ENCODE measurements at regions of chr12 and their contacts with region 1.

Region 1: DNA sequence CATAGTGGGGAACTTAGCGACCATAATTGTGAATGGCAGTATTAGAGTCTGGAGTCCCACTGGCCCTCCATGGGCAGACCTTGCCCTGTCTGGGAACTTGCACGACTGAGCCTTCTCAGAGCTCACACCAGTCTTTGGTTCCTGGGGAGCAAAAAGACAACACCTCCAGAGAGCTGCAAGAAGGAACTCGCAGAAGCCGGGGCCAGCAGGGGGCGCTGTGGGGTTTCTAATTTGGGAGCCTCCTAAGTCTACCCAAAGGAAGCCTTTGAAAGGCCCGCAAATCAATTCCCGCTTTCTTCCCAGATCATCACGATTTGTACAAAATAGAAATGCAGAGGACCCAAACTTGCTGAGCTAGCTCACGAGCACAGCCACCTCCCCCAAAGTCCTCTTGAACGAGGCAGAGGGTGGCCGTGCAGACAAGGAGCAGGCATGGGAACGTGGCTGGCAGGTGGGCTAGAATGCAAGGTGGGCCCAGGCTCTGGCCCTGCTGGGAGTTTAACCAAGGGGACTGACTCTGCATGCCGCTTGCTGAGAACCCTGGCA is 46.3 kb upstream of the FBXO21 start:
- DNase-seq: peak; percentile 69 to 82
- ATAC-seq: peak; percentile 91 to 95
- H3K4me3 ChIP-seq: no peak overlapping the region
- H3K27ac ChIP-seq: no peak overlapping the region
- H3K4me1 ChIP-seq: no peaks in the 10 kb centered on the region
- CTCF ChIP-seq: peak; percentile 88
- EP300 ChIP-seq: no peak
- POLR2A ChIP-seq: no peak
- RAD21 ChIP-seq: peak; percentile 88 to 89

Region 2: DNA sequence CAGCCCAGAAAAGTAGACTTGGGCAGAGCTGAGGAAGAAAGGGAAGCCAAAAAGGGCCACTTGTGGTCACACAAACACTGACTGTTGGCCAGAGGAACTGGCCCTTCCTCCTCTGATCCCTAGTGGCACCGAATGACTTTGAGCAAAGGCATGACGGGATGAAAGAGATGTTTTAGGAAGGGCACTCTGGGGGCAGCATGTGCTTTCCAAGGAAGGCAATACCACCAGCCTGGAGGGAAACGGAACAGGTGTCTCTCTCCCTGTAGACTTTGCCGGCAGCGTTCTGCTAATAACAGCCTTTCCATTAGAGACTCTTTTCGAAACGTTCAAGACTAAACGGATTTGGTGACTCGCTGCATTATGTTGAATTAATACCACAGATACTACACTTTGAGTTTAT is 34.0 kb before region 1 on chr12:
- CTCF ChIA-PET with region 1: interaction called, 10 read pairs
- POLR2A ChIA-PET with region 1: no interaction called
- DNase-seq: no peak
- ATAC-seq: no peak
- H3K4me3 ChIP-seq: no peak overlapping the region
- H3K27ac ChIP-seq: no peak overlapping the region
- H3K4me1 ChIP-seq: no peaks in the 10 kb centered on the region
- CTCF ChIP-seq: no peak
- EP300 ChIP-seq: no peak
- POLR2A ChIP-seq: no peak
- RAD21 ChIP-seq: no peak

Region 3: DNA sequence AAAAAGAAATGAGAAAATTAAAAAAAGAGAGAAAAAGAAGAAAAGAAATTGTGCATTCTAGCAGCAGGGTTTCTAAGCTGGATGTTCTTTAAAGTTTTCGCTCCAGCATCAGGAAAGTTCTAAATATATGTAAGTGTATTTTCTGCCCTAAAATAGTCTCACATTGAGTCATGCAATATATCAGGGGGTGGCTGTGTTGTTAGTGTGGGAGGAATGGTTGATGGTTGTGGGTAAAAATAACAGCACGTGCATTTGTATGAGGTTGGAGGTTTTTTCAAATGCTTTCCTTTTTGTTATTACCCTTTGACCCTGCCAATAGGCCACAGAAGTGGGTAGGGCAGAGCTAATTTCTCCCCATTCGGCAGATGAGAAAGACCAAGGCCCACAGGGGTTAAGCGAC is 18.9 kb after region 1 on chr12:
- CTCF ChIA-PET with region 1: interaction called, 17 read pairs
- POLR2A ChIA-PET with region 1: no interaction called
- DNase-seq: no peak
- ATAC-seq: no peak
- H3K4me3 ChIP-seq: no peak overlapping the region
- H3K27ac ChIP-seq: no peak overlapping the region
- H3K4me1 ChIP-seq: no peaks in the 10 kb centered on the region
- CTCF ChIP-seq: no peak
- EP300 ChIP-seq: no peak
- POLR2A ChIP-seq: no peak
- RAD21 ChIP-seq: no peak

Region 4: GRCh38 chr12:117261247-117261646 is 24.7 kb after region 1 on chr12:
- CTCF ChIA-PET with region 1: interaction called, 11 read pairs
- POLR2A ChIA-PET with region 1: no interaction called
- DNase-seq: peak in 1 of 2 experiments; percentile 33
- ATAC-seq: peak; percentile 52 to 55; a peak in 2 of 6 replicates
- H3K4me3 ChIP-seq: no peak overlapping the region
- H3K27ac ChIP-seq: no peak overlapping the region
- H3K4me1 ChIP-seq: no peaks in the 10 kb centered on the region
- CTCF ChIP-seq: no peak
- EP300 ChIP-seq: no peak
- POLR2A ChIP-seq: no peak
- RAD21 ChIP-seq: no peak

Region 5: GRCh38 chr12:117857632-117858612 is 621.4 kb after region 1 on chr12:
- CTCF ChIA-PET with region 1: interaction called, 16 read pairs
- POLR2A ChIA-PET with region 1: no interaction called
- DNase-seq: peak; percentile 70 to 79
- ATAC-seq: peak; percentile 49 to 64; a peak in 4 of 6 replicates
- H3K4me3 ChIP-seq: no peak overlapping the region
- H3K27ac ChIP-seq: peak overlapping the region; percentile 34 to 44; a peak in 4 of 6 replicates
- H3K4me1 ChIP-seq: peaks cover 29% of the 10 kb centered on the region
- CTCF ChIP-seq: peak; percentile 54
- EP300 ChIP-seq: no peak
- POLR2A ChIP-seq: no peak
- RAD21 ChIP-seq: peak in 1 of 2 experiments; percentile 27; a peak in 1 of 5 replicates

Measured in A549 (cell line).